ENCODE measurements at regions of chr17 and their contacts with region 1.

Region 1: GRCh38 chr17:5203908-5204294 is 12.2 kb upstream of the ZNF594 start:
- DNase-seq: no peak
- H3K4me3 ChIP-seq: no peak overlapping the region
- H3K27ac ChIP-seq: peak overlapping the region in 1 of 8 donors; percentile 86
- H3K4me1 ChIP-seq: peaks cover 0 to 20% (median 1%) of the 10 kb centered on the region in 6 donors
- H3K27me3 ChIP-seq: no peaks in the 10 kb centered on the region
- CTCF ChIP-seq: no peak
- POLR2A ChIP-seq: no peak

Region 2: DNA sequence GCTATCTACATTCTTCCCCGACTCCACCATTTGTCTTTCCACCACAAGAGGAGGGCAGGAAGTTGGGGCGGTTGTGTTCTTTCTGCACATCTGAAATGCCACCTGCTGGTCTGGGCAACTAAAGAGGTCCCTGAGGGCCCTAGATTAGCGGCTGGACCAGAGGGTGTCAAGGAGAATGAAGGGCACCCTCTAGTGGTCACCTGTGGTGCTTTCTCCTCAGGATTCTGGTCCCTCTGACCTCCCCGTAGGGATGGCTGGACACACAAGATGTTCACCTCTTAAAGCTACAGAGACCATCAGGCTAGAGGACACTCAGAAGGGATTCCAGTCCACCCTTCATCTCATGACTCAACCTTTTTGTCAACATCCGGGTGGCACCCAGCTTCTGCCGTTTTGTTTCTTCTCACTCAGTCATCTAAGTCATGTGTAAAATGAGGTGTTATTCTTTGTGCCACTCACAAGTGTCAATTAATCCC is 33.7 kb after region 1 on chr17:
- intact Hi-C with region 1: loop called (anchors 5 kb)
- DNase-seq: peak; percentile 80
- H3K4me3 ChIP-seq: peak overlapping the region in 1 of 8 donors; percentile 1
- H3K27ac ChIP-seq: peak overlapping the region in 7 of 8 donors; percentile 37 to 93 (median 81)
- H3K4me1 ChIP-seq: peaks cover 0 to 77% (median 42%) of the 10 kb centered on the region in 6 donors
- H3K27me3 ChIP-seq: no peaks in the 10 kb centered on the region
- CTCF ChIP-seq: peak; percentile 43 to 83 (median 78)
- POLR2A ChIP-seq: no peak